Activated naive CD8-positive, alpha-beta T cell treated with anti-CD3 and anti-CD28 coated beads, Interleukin-2, amount 10 ng/mL, durations not matched to agents 7 days and 5 days (primary cell): ENCODE measurements at regions of chr19 and their contacts with region 1.

Region 1: GRCh38 chr19:47243776-47244547 is 12.4 kb upstream of the CCDC9 start:
- DNase-seq: peak; percentile 99
- ATAC-seq: peak; percentile 85
- H3K4me3 Mint-ChIP-seq: peak overlapping the region; percentile 87
- H3K27ac Mint-ChIP-seq: peak overlapping the region; percentile 96
- H3K4me1 Mint-ChIP-seq: peaks cover 28% of the 10 kb centered on the region
- H3K27me3 Mint-ChIP-seq: no peaks in the 10 kb centered on the region

Region 2: GRCh38 chr19:47145639-47146486 is 98.1 kb before region 1 on chr19:
- POLR2A ChIA-PET with region 1: interaction called, 10 read pairs
- DNase-seq: no peak
- ATAC-seq: peak; percentile 89
- H3K4me3 Mint-ChIP-seq: peak overlapping the region; percentile 60
- H3K27ac Mint-ChIP-seq: peak overlapping the region; percentile 89
- H3K4me1 Mint-ChIP-seq: peaks cover 46% of the 10 kb centered on the region
- H3K27me3 Mint-ChIP-seq: no peaks in the 10 kb centered on the region

Region 3: GRCh38 chr19:47186446-47187334 is 57.3 kb before region 1 on chr19:
- POLR2A ChIA-PET with region 1: interaction called, 15 read pairs
- DNase-seq: peak; percentile 69
- ATAC-seq: peak; percentile 81
- H3K4me3 Mint-ChIP-seq: peak overlapping the region; percentile 81
- H3K27ac Mint-ChIP-seq: peak overlapping the region; percentile 99
- H3K4me1 Mint-ChIP-seq: peaks cover 60% of the 10 kb centered on the region
- H3K27me3 Mint-ChIP-seq: no peaks in the 10 kb centered on the region

Region 4: GRCh38 chr19:47200530-47200929 is 43.4 kb before region 1 on chr19:
- POLR2A ChIA-PET with region 1: no interaction called
- DNase-seq: no peak
- ATAC-seq: no peak
- H3K4me3 Mint-ChIP-seq: no peak overlapping the region
- H3K27ac Mint-ChIP-seq: no peak overlapping the region
- H3K4me1 Mint-ChIP-seq: peaks cover 5% of the 10 kb centered on the region
- H3K27me3 Mint-ChIP-seq: no peaks in the 10 kb centered on the region

Region 5: GRCh38 chr19:47225746-47226425 is 18.1 kb before region 1 on chr19:
- POLR2A ChIA-PET with region 1: interaction called, 99 read pairs
- DNase-seq: peak; percentile 94
- ATAC-seq: peak; percentile 69
- H3K4me3 Mint-ChIP-seq: peak overlapping the region; percentile 45
- H3K27ac Mint-ChIP-seq: peak overlapping the region; percentile 69
- H3K4me1 Mint-ChIP-seq: peaks cover 7% of the 10 kb centered on the region
- H3K27me3 Mint-ChIP-seq: no peaks in the 10 kb centered on the region

Region 6: DNA sequence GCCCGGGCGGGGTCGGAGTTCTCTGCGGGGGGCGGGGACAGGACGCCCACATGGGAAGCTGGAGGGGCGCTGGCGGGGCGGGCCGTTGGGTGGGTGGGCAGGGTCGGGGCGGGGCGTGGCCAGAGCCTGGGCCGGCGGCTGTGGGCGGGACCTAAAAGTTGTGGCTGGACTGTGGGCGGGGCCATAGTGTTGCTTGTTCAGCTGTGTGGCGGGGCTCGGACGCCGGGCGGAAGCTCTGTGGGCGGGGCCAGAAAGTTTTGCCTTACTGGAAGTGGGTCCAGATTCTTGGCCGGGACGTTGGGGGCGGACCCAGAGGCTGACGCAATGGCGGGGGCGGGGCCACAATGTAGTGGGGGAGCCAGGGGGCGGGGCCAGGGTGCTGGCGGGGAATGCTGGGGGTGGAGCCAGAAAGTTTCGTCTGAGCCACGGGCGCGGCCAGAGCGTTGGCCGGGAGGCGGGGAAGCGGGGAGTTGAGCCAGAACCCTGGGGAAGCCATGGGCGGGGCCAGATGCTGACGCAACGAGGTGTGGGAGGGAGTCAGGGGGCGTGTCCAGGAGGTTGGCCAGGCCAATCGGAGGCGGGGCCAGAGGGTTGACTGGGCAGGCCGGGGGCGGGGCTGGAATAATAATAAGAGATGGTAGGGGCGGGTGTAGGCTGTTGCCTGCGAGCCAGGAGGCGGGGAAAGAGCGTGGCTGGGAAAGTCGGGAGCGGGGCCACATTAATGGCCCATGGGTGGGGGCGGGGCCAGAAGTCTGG is 12.9 kb after region 1 on chr19:
- POLR2A ChIA-PET with region 1: interaction called, 23 read pairs
- DNase-seq: peak; percentile 100
- ATAC-seq: peak; percentile 90
- H3K4me3 Mint-ChIP-seq: peak overlapping the region; percentile 97
- H3K27ac Mint-ChIP-seq: peak overlapping the region; percentile 96
- H3K4me1 Mint-ChIP-seq: peaks cover 29% of the 10 kb centered on the region
- H3K27me3 Mint-ChIP-seq: no peaks in the 10 kb centered on the region

Region 7: GRCh38 chr19:47267350-47267759 is 23.4 kb after region 1 on chr19:
- POLR2A ChIA-PET with region 1: no interaction called
- DNase-seq: no peak
- ATAC-seq: no peak
- H3K4me3 Mint-ChIP-seq: no peak overlapping the region
- H3K27ac Mint-ChIP-seq: no peak overlapping the region
- H3K4me1 Mint-ChIP-seq: peaks cover 1% of the 10 kb centered on the region
- H3K27me3 Mint-ChIP-seq: no peaks in the 10 kb centered on the region